H1 (cell line): ENCODE measurements at regions of chr2 and their contacts with region 1.

Region 1: DNA sequence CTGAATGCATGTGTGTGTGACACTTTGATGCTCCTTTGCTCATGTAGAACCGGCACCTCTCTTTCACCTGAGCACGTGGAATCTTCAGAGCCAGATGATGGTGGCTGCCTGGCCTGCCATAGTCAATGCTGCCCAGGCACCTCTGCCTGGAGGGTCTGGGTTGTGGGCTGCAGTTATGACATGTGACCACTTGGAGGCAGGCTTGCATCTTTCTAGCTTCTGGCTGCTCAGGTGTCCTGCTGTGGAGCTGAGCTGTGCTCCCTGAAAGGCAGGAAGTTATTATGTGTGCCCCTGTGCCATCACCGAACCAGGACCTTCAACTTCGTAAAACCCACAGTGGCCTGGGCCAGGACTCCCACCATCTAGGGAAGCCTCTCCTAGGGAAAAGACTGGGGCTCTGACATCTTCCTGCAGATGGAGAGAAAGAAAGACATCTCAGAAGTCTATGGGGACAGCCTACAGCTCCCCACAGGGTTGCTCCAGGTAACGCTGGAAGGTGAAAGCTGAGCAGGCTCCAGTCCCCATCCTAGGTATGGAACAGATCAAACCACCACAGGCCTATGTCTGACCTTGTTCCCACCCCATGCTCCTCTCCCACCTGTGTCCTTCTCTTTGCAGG is 30.2 kb downstream of the PSD4 start:
- DNase-seq: peak; percentile 47 to 91
- H3K4me3 ChIP-seq: no peak overlapping the region
- H3K27ac ChIP-seq: no peak overlapping the region
- H3K4me1 ChIP-seq: no peaks in the 10 kb centered on the region; a peak in 1 of 7 replicates
- H3K27me3 ChIP-seq: no peaks in the 10 kb centered on the region
- CTCF ChIP-seq: peak; percentile 92 to 98 (median 93)
- EP300 ChIP-seq: no peak
- POLR2A ChIP-seq: no peak
- RAD21 ChIP-seq: peak; percentile 95 to 97

Region 2: DNA sequence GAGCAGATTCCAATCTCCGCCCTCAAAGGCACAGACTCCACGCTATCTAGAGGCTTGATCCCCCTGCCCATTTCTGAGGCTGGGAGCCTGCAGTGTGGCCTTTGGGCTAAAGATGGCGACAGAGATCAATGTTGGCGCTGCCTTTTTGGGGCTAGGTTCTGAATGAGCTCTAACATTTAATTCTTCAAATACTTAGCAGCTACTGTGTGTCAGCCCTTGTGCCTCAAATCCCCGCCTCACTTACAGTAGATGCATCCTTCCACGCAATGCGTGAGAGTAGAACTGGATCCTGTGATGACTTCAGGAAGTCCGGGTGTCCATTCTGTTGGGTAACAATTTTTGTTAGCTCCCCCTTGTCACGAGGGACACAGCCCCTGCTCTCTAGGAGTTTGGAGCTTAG is 123.9 kb before region 1 on chr2:
- CTCF ChIA-PET with region 1: interaction called, 159 read pairs
- POLR2A ChIA-PET with region 1: no interaction called
- DNase-seq: peak; percentile 23 to 89
- H3K4me3 ChIP-seq: no peak overlapping the region
- H3K27ac ChIP-seq: no peak overlapping the region
- H3K4me1 ChIP-seq: peaks cover 0 to 2% (median 0%) of the 10 kb centered on the region in 4 experiments; a peak in 1 of 7 replicates
- H3K27me3 ChIP-seq: no peaks in the 10 kb centered on the region; a peak in 1 of 7 replicates
- CTCF ChIP-seq: peak; percentile 86 to 88 (median 87)
- EP300 ChIP-seq: no peak
- POLR2A ChIP-seq: no peak
- RAD21 ChIP-seq: peak; percentile 81 to 85

Region 3: DNA sequence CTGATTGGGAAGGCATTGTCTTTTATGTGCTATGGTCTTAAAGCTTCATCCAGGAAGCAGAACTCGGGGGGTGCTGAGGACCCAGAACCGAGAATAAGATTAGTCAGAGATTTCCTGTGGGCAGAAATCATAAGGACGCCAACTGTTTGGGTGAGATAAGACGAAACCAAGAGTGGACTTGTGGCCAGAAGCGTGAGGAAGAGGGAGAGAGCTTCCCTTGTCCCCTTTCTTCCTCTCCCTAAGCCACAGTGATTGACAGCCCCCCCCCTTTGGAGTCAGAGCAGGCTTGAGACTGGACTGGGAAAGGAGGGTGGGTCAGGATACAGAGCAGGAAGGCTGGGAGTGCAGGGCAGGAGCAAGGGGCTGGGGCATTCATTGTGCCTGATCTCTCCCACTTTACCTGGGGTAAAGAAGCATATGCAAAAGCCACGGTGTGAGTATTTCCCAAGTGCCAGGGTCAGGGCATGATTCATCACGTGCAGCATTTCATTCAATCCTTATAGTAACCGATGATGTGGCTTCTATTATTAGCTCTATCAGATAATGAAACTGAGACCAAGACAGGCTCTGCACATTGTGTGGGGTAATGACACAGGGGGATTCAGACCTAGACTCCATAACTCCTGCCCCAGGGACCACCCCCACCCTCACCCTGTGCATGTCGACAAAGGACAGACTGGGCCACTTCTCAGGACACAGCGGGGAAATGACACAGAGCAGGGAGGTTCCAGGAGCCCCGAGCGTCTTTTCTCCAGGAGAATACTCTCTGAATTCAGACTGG is 79.6 kb before region 1 on chr2:
- CTCF ChIA-PET with region 1: no interaction called
- POLR2A ChIA-PET with region 1: no interaction called
- DNase-seq: no peak
- H3K4me3 ChIP-seq: no peak overlapping the region
- H3K27ac ChIP-seq: no peak overlapping the region
- H3K4me1 ChIP-seq: no peaks in the 10 kb centered on the region
- H3K27me3 ChIP-seq: no peaks in the 10 kb centered on the region
- CTCF ChIP-seq: no peak
- EP300 ChIP-seq: no peak
- POLR2A ChIP-seq: no peak
- RAD21 ChIP-seq: no peak

Region 4: GRCh38 chr2:113192438-113193100 is 11.4 kb before region 1 on chr2:
- CTCF ChIA-PET with region 1: interaction called, 35 read pairs
- POLR2A ChIA-PET with region 1: no interaction called
- DNase-seq: no peak
- H3K4me3 ChIP-seq: no peak overlapping the region
- H3K27ac ChIP-seq: no peak overlapping the region
- H3K4me1 ChIP-seq: no peaks in the 10 kb centered on the region
- H3K27me3 ChIP-seq: no peaks in the 10 kb centered on the region
- CTCF ChIP-seq: peak; percentile 64 to 70 (median 69)
- EP300 ChIP-seq: no peak
- POLR2A ChIP-seq: no peak
- RAD21 ChIP-seq: peak; percentile 66 to 71

Region 5: GRCh38 chr2:113233593-113234550 is 29.9 kb after region 1 on chr2:
- CTCF ChIA-PET with region 1: interaction called, 28 read pairs
- POLR2A ChIA-PET with region 1: interaction called, 4 read pairs
- DNase-seq: no peak
- H3K4me3 ChIP-seq: no peak overlapping the region
- H3K27ac ChIP-seq: no peak overlapping the region
- H3K4me1 ChIP-seq: no peaks in the 10 kb centered on the region
- H3K27me3 ChIP-seq: no peaks in the 10 kb centered on the region
- CTCF ChIP-seq: peak in 2 of 3 experiments; percentile 7 to 14; a peak in 2 of 4 replicates
- EP300 ChIP-seq: no peak
- POLR2A ChIP-seq: no peak
- RAD21 ChIP-seq: no peak; a peak in 1 of 4 replicates

Region 6: DNA sequence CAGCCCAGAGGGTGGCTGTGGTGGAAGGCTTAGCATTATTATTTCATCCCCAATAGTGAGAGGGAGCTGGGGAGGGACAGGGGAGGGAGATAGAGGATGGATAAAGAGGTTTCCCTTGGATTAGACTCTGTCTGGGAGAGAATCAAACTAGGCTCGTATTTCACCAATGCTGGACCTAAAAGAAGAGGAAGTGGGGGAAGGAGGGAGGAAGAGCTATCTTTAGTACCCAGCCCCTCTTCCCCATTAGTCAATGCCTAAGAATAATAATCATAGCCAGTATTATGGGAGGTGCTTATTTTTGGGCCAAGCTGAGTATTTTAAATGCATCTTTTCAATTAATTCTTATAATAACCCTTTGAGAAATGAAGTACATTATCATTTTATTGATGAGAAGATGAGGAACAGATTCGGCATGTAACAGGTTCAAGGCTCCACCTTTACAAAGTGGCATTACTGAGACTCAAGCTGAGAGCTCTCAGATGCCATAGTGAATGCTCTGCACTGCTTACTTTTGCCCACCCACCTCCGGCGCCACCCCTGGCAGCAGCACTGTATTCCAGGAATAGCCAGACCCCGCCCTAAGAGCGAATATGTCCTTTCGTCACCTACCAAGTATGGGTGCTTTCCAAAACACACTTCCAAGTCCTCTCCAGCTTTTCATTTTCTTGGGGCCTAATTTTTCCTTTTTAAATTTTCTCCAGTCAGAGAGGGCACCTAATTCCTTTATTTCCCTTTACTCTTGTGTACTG is 53.7 kb after region 1 on chr2:
- CTCF ChIA-PET with region 1: interaction called, 12 read pairs
- POLR2A ChIA-PET with region 1: interaction called, 4 read pairs
- DNase-seq: no peak
- H3K4me3 ChIP-seq: no peak overlapping the region
- H3K27ac ChIP-seq: no peak overlapping the region
- H3K4me1 ChIP-seq: no peaks in the 10 kb centered on the region; a peak in 1 of 7 replicates
- H3K27me3 ChIP-seq: peaks cover 0 to 2% (median 0%) of the 10 kb centered on the region in 4 experiments; a peak in 3 of 7 replicates
- CTCF ChIP-seq: no peak
- EP300 ChIP-seq: no peak
- POLR2A ChIP-seq: no peak
- RAD21 ChIP-seq: no peak

Region 7: DNA sequence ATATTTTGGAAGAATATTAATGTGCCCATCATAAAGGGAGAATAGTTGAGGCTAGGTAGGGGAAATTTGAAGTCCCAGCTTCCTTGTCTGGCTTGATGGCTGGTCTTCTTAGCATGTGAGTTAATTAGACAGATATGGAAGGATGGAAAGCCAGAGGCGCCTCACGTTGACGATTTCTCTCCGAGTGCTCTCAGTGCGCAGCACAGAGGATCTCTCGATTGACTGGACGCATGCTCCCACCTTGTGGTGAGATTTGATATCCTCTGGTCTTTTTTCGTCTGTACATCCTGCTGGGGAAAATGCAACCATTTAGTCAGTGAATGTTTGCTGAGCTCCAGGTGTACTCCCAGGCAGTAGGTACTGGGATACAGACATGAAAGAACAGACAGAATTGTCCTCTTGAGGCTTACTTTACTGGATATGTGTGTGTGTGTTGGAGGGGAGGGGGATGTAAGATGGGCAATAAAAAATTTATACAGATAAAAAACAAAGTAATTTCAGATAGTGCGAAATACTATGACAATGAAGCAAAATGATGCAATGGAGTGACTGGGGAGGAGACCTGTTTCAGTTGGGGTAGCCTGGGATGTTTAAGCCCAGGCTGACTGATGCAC is 166.6 kb after region 1 on chr2:
- CTCF ChIA-PET with region 1: interaction called, 74 read pairs
- POLR2A ChIA-PET with region 1: interaction called, 3 read pairs
- DNase-seq: peak; percentile 9 to 66
- H3K4me3 ChIP-seq: no peak overlapping the region
- H3K27ac ChIP-seq: no peak overlapping the region
- H3K4me1 ChIP-seq: no peaks in the 10 kb centered on the region
- H3K27me3 ChIP-seq: no peaks in the 10 kb centered on the region
- CTCF ChIP-seq: peak; percentile 41 to 81 (median 75)
- EP300 ChIP-seq: no peak
- POLR2A ChIP-seq: no peak
- RAD21 ChIP-seq: peak; percentile 87 to 88